Heart right ventricle (tissue), 16 donors: ENCODE measurements at regions of chr3 and their contacts with region 1.

Region 1: DNA sequence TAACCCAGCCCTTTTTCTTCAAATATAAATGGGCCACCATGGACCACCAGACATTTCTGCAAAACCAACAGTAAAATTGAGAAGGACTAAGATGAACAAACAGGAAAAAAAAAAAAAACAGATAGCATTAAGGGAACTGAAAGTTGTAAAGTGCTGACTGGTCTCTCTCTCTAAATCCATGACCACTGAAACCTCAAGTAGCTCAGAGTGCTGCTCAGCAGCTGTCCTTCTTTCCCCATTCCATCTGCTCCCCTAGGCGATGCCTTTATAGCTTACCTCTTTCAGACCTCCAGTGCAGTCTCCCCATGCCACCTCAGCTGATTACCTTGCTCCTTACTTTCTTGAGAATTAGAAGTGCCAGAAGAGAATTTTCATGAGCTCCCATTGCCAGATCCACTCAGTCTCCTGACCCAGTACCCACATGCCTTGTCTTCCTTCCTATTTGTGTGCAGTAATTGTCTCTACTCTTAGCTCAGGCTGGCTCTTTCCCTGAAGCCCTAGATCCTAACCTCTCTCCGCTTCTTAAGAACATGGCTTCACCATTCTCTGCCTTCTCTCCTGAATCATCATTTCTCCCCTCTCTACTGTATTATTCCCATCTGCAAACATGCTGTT is 23.9 kb upstream of the XIRP1 start:
- DNase-seq: no peak
- ATAC-seq: peak in 2 of 8 donors; percentile 49 to 58
- H3K4me3 ChIP-seq: no peak overlapping the region
- H3K27ac ChIP-seq: peak overlapping the region in 1 of 10 donors; percentile 64
- H3K4me1 ChIP-seq: peaks cover 0 to 35% (median 0%) of the 10 kb centered on the region in 9 donors
- H3K27me3 ChIP-seq: no peaks in the 10 kb centered on the region
- CTCF ChIP-seq: no peak

Region 2: GRCh38 chr3:38890426-38890825 is 325.9 kb before region 1 on chr3:
- intact Hi-C with region 1: loop called in 1 of 10 experiments (anchors 10 kb)
- DNase-seq: no peak
- ATAC-seq: no peak
- H3K4me3 ChIP-seq: no peak overlapping the region
- H3K27ac ChIP-seq: no peak overlapping the region
- H3K4me1 ChIP-seq: no peaks in the 10 kb centered on the region
- H3K27me3 ChIP-seq: no peaks in the 10 kb centered on the region
- CTCF ChIP-seq: no peak

Region 3: GRCh38 chr3:39255503-39256325 is 39.4 kb after region 1 on chr3:
- intact Hi-C with region 1: loop called in 2 of 10 experiments (anchors 2 to 5 kb)
- DNase-seq: peak in 1 of 2 donors; percentile 19
- ATAC-seq: peak; percentile 40 to 76 (median 60)
- H3K4me3 ChIP-seq: no peak overlapping the region
- H3K27ac ChIP-seq: peak overlapping the region in 5 of 10 donors; percentile 8 to 81 (median 41)
- H3K4me1 ChIP-seq: peaks cover 0 to 66% (median 15%) of the 10 kb centered on the region in 9 donors
- H3K27me3 ChIP-seq: no peaks in the 10 kb centered on the region
- CTCF ChIP-seq: no peak

Region 4: GRCh38 chr3:39260957-39261356 is 44.7 kb after region 1 on chr3:
- intact Hi-C with region 1: loop called in 1 of 10 experiments (anchors 5 kb)
- DNase-seq: peak; percentile 77 to 83
- ATAC-seq: peak; percentile 93 to 99 (median 96)
- H3K4me3 ChIP-seq: no peak overlapping the region
- H3K27ac ChIP-seq: peak overlapping the region in 7 of 10 donors; percentile 12 to 65 (median 57)
- H3K4me1 ChIP-seq: peaks cover 0 to 63% (median 20%) of the 10 kb centered on the region in 9 donors
- H3K27me3 ChIP-seq: no peaks in the 10 kb centered on the region
- CTCF ChIP-seq: peak in 7 of 9 donors; percentile 31 to 62 (median 54)

Region 5: DNA sequence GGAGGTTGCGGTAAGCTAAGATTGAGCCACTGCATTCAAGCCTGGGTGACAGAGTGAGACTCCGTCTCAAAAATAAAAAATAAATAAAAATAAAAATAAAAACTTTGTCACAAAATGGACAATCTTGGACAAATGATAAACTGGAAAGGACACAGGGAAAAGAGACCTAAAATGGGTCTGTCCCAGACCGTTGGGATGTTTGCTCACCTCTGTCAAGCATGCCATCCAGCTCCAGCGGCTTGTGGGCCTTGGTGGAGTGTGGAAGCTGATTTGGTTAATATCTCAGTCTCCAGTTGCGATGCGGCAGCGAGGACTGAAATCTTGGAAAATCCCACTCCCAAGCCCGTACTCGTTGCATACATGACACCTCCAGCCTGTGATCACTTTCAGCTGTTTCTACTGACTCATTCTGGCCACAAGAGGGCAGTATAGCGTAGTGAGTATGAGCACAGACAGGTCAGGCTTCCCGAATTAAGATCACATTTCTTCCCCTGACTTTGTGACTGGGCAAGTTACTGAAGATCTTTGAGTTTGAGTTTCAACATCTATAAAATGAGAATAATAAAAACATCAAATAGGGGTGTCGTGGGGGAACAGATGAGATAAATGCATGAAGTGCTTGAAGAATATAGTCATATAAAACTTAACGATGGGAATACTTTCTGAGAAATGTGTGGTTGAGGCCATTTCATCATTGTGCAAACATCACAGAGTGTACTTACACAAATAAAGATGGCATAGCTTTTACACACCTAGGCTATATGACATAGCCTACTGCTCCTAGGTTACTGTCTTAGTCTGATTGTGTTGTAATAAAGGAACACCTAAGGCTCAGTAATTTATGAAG is 231.6 kb after region 1 on chr3:
- intact Hi-C with region 1: no loop called
- DNase-seq: peak in 1 of 2 donors; percentile 75
- ATAC-seq: peak; percentile 67 to 92 (median 90)
- H3K4me3 ChIP-seq: no peak overlapping the region
- H3K27ac ChIP-seq: no peak overlapping the region
- H3K4me1 ChIP-seq: peaks cover 0 to 5% (median 0%) of the 10 kb centered on the region in 9 donors
- H3K27me3 ChIP-seq: peaks cover 0 to 4% (median 0%) of the 10 kb centered on the region in 7 donors
- CTCF ChIP-seq: peak; percentile 71 to 94 (median 88)